ENCODE measurements at regions of chr9 and their contacts with region 1.

Region 1: DNA sequence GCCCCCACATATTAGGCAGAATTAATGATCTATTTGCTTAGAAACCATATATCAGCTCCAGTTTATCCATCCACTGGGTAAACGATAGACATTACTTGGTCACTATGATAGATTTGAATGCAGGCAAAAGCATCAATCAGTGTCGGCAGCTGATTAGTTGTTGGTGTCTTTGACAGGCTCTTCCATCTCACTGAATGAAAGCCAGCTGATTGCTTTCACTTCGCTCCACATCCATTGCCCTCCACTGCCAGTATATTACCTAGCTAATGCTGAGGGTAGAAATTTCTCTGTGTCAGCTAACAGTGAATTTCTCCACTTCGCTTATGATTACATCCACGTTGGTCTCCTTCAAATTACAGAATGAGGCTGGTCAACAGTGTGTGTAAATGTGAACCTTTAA is 821.3 kb upstream of the TYRP1 start:
- DNase-seq: no peak
- ATAC-seq: no peak
- H3K4me3 ChIP-seq: no peak overlapping the region
- H3K27ac ChIP-seq: no peak overlapping the region
- H3K4me1 ChIP-seq: no peaks in the 10 kb centered on the region
- H3K27me3 ChIP-seq: no peaks in the 10 kb centered on the region
- CTCF ChIP-seq: no peak

Region 2: GRCh38 chr9:11663913-11664312 is 207.9 kb before region 1 on chr9:
- intact Hi-C with region 1: no loop called
- DNase-seq: no peak
- ATAC-seq: no peak
- H3K4me3 ChIP-seq: no peak overlapping the region
- H3K27ac ChIP-seq: no peak overlapping the region
- H3K4me1 ChIP-seq: no peaks in the 10 kb centered on the region
- H3K27me3 ChIP-seq: no peaks in the 10 kb centered on the region
- CTCF ChIP-seq: no peak

Region 3: GRCh38 chr9:11821306-11821975 is 50.4 kb before region 1 on chr9:
- intact Hi-C with region 1: loop called in 1 of 10 experiments (anchors 10 kb)
- DNase-seq: no peak
- ATAC-seq: no peak
- H3K4me3 ChIP-seq: no peak overlapping the region
- H3K27ac ChIP-seq: no peak overlapping the region
- H3K4me1 ChIP-seq: no peaks in the 10 kb centered on the region
- H3K27me3 ChIP-seq: no peaks in the 10 kb centered on the region
- CTCF ChIP-seq: no peak

Measured in heart right ventricle (tissue), 16 donors.